GM18951 (cell line): ENCODE measurements at regions of chr15 and their contacts with region 1.

Region 1: DNA sequence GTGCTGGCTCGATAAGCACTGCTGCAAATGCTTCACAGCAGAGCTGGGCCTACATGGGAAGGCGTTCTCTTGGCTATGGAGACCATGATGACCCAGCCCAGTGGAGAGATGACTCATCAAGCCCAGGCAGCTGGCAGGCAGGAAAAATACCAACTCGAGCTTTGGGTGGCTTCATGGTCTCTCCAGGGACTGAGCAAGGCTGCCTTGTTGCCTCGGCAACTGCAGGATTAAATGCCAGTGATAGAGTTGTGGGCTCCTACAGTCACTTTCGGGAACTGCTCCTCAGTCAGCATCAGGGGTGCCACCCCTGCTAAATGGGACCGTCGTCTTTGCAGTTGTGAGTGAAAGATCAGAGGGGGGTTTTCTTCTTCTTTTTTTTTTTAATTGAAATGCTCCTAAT is 54.6 kb upstream of the MYZAP start:
- POLR2A ChIP-seq: no peak

Region 2: GRCh38 chr15:57146506-57147201 is 390.4 kb before region 1 on chr15:
- in situ Hi-C with region 1: loop called (anchors 10 kb)
- POLR2A ChIP-seq: no peak

Region 3: DNA sequence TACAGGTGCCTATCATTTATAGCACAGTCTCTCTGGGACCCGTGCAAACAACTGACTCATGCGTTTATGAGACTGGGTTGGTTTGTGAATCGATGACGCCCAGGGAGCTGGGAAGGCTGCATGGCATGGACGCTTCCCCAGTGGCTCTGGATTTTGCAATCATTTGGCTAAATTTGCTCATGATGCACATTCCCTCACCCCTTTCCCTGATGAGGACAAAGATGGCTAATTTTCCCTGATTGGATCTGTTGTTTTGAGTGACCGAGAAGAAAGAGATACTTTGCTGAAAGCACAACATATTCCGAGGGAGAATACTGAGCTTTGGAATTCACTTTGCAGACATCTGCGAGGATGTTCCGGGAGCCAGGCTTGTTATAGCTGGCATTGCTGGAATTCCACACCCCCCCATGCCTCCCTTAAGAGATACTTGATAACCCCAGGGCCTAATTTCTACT is 109.7 kb before region 1 on chr15:
- in situ Hi-C with region 1: no loop called
- POLR2A ChIP-seq: no peak

Region 4: GRCh38 chr15:57820119-57820518 is 283.0 kb after region 1 on chr15:
- in situ Hi-C with region 1: no loop called
- POLR2A ChIP-seq: no peak